WTC11 (cell line): ENCODE measurements at regions of chr10 and their contacts with region 1.

Region 1: DNA sequence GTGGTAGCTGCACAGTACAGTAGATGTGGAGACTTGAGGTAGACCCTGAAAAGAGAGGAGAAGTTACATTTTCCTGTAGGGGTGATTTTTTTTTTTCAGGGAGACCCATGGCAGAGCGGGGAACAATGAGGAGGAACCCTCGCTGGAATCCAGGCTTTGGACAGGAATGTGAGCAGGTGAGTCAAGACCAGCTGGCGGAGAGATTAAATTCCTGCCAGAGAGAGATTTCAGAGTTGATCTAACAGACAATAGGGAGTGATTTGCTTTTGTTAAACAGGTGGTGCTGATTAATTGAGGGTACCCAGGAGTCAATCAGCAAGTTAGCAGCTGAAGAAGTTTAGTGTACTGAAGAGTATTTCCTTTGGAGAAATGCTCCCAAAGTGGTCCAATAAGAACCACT is 41.6 kb upstream of the MINDY3 start:
- DNase-seq: no peak
- ATAC-seq: peak; percentile 80
- H3K4me3 Mint-ChIP-seq: no peak overlapping the region
- H3K27ac Mint-ChIP-seq: no peak overlapping the region
- H3K4me1 Mint-ChIP-seq: peaks cover 9% of the 10 kb centered on the region
- H3K27me3 Mint-ChIP-seq: no peaks in the 10 kb centered on the region
- CTCF ChIP-seq: no peak

Region 2: DNA sequence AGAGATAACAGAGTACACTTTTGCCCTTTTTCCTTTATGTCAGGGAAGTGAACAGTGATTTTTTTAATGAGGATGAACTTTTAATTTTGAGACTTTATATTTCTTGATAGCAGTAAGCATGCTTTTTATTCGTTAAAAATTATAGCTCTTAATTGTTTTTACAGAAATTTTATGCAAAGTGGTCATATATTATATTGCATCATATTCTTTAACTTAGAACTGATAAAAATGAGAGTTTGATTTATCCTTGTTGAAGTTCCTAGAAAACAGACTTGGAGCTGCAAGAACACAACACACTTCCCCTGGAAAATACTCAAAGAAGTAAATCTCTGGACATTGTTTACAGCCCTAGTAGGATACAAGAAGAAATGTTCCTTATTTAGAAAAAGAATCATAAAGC is 20.3 kb before region 1 on chr10:
- CTCF ChIA-PET with region 1: interaction called, 10 read pairs
- POLR2A ChIA-PET with region 1: no interaction called
- DNase-seq: no peak
- ATAC-seq: no peak
- H3K4me3 Mint-ChIP-seq: no peak overlapping the region
- H3K27ac Mint-ChIP-seq: no peak overlapping the region
- H3K4me1 Mint-ChIP-seq: peaks cover 12% of the 10 kb centered on the region
- H3K27me3 Mint-ChIP-seq: peaks cover 9% of the 10 kb centered on the region
- CTCF ChIP-seq: no peak